Gastrocnemius medialis (tissue), 4 donors: ENCODE measurements at regions of chr3 and their contacts with region 1.

Region 1: DNA sequence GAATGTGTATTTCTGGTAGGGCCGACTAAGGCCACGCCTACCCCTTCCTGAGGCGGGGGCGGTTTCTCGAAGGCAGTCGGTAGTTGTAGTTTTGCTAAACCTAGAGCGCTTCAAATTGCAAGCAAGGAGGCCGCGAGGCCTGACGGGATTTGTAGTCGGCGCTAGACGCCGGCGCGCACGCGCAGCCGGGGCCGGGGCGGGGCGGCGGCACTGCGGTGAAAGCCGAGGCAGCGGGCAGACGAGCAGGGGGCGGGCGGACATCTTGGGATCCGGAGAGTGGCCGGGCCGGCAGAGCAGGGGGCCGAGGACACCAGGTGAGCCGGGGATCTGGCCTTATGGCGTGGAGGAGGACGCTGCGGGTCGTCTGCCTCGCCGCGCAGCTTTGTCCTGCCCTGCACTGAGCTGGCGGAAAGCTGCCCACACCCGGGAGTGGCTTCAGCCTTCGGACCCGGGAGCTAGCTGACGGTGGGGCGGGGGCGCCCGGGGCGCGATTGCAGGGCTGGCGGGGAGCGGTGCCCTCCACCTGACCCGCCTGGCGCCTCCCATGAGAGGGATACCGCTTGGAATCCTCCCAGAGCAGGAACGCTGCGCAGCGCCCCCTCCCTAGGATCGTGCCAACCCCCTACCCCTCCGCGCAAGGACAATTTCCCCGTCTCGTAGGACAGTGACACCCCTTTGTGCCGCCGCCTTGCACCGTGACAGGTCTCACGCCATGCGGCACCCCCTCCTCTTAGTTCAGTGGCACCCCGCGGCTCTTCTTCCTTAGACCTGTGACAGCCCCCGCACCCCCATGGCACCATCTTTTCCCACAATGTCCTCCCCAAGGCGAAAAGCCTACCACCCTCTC is at the start of gene AP2M1:
- DNase-seq: peak; percentile 98 to 100
- ATAC-seq: peak; percentile 94 to 96
- H3K4me3 ChIP-seq: peak within 1 kb of the TSS; percentile 95 to 98 (median 96)
- H3K27ac ChIP-seq: peak within 1 kb of the TSS; percentile 97 to 99 (median 98)
- H3K4me1 ChIP-seq: peaks cover 29 to 39% of the 10 kb centered on the region in 2 donors
- H3K27me3 ChIP-seq: no peaks in the 10 kb centered on the region
- CTCF ChIP-seq: peak in 1 of 5 experiments; percentile 14
- POLR2A ChIP-seq: peak; percentile 88 to 90
- total RNA-seq, gene AP2M1: 110 to 132 (median 117) TPM

Region 2: GRCh38 chr3:183895296-183895695 is 279.6 kb before region 1 on chr3:
- in situ Hi-C with region 1: no loop called
- intact Hi-C with region 1: no loop called
- DNase-seq: no peak
- ATAC-seq: peak; percentile 81 to 83
- H3K4me3 ChIP-seq: no peak overlapping the region
- H3K27ac ChIP-seq: no peak overlapping the region
- H3K4me1 ChIP-seq: peaks cover 0 to 4% of the 10 kb centered on the region in 2 donors
- H3K27me3 ChIP-seq: no peaks in the 10 kb centered on the region
- CTCF ChIP-seq: peak; percentile 69 to 79 (median 76)
- POLR2A ChIP-seq: no peak

Region 3: GRCh38 chr3:184099806-184100686 is 74.8 kb before region 1 on chr3:
- in situ Hi-C with region 1: no loop called
- intact Hi-C with region 1: no loop called
- DNase-seq: no peak
- ATAC-seq: no peak
- H3K4me3 ChIP-seq: no peak overlapping the region
- H3K27ac ChIP-seq: no peak overlapping the region
- H3K4me1 ChIP-seq: no peaks in the 10 kb centered on the region
- H3K27me3 ChIP-seq: peaks cover 0 to 11% (median 7%) of the 10 kb centered on the region in 3 donors
- CTCF ChIP-seq: no peak
- POLR2A ChIP-seq: no peak

Region 4: GRCh38 chr3:184154885-184155643 is 19.8 kb before region 1 on chr3 and contains the start of gene DVL3:
- in situ Hi-C with region 1: no loop called
- intact Hi-C with region 1: loop called (anchors 2 kb)
- DNase-seq: peak; percentile 51 to 71
- ATAC-seq: peak; percentile 84 to 90
- H3K4me3 ChIP-seq: peak within 1 kb of the TSS; percentile 83 to 99 (median 94)
- H3K27ac ChIP-seq: peak within 1 kb of the TSS; percentile 89 to 97 (median 94)
- H3K4me1 ChIP-seq: peaks cover 42 to 53% of the 10 kb centered on the region in 2 donors
- H3K27me3 ChIP-seq: no peaks in the 10 kb centered on the region
- CTCF ChIP-seq: no peak
- POLR2A ChIP-seq: peak; percentile 52 to 78
- total RNA-seq, gene DVL3: 36.5 to 58.1 (median 48.0) TPM

Region 5: GRCh38 chr3:184209146-184209923 is 34.5 kb after region 1 on chr3:
- in situ Hi-C with region 1: no loop called
- intact Hi-C with region 1: no loop called
- DNase-seq: no peak
- ATAC-seq: peak in 1 of 2 donors; percentile 39
- H3K4me3 ChIP-seq: no peak overlapping the region
- H3K27ac ChIP-seq: no peak overlapping the region
- H3K4me1 ChIP-seq: no peaks in the 10 kb centered on the region
- H3K27me3 ChIP-seq: no peaks in the 10 kb centered on the region
- CTCF ChIP-seq: no peak
- POLR2A ChIP-seq: no peak

Region 6: DNA sequence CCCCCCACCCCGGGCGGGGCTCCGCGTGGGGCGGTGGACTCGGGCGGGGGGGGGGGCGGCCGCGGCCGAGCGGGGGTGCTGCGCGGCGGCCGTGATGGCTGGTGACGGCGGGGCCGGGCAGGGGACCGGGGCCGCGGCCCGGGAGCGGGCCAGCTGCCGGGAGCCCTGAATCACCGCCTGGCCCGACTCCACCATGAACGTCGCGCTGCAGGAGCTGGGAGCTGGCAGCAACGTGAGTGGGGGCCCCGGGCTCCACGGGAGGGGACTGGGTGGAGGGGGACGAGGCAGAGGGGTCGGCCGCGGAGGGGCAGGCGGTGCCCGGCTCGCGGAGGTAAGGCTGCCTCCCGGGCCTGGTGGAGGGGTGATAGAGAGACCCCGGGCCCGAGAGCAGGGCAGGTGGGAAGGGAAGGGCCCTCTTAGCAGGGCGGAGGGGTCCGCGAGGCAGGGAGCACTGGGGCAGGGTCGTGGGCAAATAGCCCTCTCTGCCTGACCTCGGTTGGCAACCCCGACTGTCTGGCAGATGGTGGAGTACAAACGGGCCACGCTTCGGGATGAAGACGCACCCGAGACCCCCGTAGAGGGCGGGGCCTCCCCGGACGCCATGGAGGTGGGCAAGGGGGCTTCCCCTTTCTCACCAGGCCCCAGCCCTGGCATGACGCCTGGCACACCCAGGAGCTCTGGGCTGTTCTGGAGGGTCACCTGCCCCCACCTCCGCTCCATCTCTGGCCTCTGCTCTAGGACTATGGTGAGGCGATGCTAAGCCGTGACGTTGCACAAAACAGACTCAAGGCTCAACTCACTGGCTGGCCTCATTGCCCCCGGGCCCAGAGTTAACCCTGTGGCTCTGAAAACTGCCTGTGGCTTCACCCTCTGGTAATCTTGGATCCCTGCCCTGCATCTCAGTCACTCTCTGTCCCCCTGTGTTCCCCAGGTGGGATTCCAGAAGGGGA is 101.4 kb after region 1 on chr3 and contains the start of gene ECE2:
- in situ Hi-C with region 1: no loop called
- intact Hi-C with region 1: no loop called
- DNase-seq: no peak
- ATAC-seq: no peak
- H3K4me3 ChIP-seq: no peak within 1 kb of the TSS
- H3K27ac ChIP-seq: no peak within 1 kb of the TSS
- H3K4me1 ChIP-seq: no peaks in the 10 kb centered on the region
- H3K27me3 ChIP-seq: peaks cover 20 to 28% (median 24%) of the 10 kb centered on the region in 3 donors
- CTCF ChIP-seq: no peak
- POLR2A ChIP-seq: no peak
- total RNA-seq, gene ECE2: not detected